Motor neuron (in vitro differentiated cells): ENCODE measurements at regions of chr1 and their contacts with region 1.

Region 1: DNA sequence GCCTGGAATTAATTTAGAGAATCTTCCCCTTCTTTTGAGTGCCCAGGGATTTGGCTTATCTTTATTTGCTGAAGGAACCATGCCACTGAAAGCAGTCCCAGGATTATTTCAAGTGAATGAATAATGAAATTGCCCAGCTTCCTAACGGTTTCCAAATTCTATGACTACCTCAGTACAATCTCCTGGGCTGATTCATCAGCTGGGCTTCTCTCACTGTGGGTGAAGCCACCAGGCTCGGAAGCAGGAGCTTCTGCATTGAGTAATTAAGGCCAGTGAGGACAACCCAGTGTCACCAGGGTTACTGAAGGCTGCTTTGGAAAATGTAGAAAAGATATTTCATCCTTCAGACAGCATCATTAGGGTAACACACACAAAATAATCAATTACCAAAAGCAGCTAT is 169.8 kb downstream of the DAB1 start:
- ATAC-seq: peak; percentile 9 to 94 (median 85)
- H3K4me3 ChIP-seq: no peak overlapping the region
- H3K27ac ChIP-seq: no peak overlapping the region
- H3K4me1 ChIP-seq: peaks cover 26 to 41% of the 10 kb centered on the region in 2 donors

Region 2: DNA sequence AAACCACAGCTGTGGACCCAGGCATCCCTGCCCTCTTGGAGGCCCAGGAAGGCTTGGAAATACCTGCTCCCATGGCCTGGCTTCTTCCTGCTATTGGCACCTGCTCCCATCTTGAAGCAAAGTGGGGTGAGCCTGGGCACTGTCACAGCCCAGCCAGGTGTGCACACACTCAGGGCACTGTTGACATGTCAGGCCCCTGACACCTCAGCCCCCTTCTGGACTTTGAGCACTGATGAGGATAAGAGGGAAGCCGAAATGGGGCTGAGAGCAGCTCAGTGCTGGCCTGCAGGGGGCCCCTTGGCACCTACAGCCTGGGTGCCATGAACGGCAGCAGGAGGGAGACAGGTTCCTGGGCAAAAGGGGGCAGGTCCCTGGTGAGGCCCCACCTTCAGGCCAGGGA is 113.9 kb after region 1 on chr1:
- in situ Hi-C with region 1: no loop called
- ATAC-seq: no peak
- H3K4me3 ChIP-seq: no peak overlapping the region
- H3K27ac ChIP-seq: no peak overlapping the region
- H3K4me1 ChIP-seq: peaks cover 3 to 5% of the 10 kb centered on the region in 2 donors

Region 3: DNA sequence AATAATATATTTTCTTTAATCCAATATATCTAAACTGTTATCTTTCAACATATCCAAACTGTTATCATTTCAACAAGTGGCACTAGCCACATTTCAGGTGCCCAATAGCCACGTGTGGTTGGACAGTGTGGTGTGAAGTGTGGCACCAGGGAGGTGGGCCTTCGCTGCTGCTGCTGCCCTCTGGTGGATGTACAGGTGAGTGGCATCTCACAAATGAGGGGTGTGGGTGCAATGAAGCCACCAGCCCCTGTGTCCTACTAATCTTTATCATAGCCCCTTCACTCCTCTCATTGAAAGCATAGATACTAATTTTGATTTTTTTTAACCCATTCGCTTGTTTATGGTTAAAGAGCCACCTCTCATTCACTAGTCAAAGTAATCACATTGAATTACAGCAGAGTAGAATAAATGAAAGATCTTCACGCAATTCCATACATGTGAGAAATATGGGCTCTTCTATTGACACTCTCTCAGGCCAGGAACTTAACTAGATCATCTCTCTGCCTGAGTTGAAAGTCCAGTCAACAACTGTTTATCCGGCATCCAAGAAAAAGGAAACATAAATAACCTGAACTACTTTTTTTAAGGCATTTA is 793.3 kb after region 1 on chr1:
- in situ Hi-C with region 1: loop called in 1 of 9 experiments (anchors 25 kb)
- ATAC-seq: peak in 6 of 8 experiments; percentile 46 to 77 (median 55)
- H3K4me3 ChIP-seq: no peak overlapping the region
- H3K27ac ChIP-seq: no peak overlapping the region
- H3K4me1 ChIP-seq: peaks cover 4 to 8% of the 10 kb centered on the region in 2 donors